ENCODE measurements at regions of chr13 and their contacts with region 1.

Region 1: GRCh38 chr13:110379905-110380341 is 72.8 kb downstream of the COL4A2 start:
- DNase-seq: no peak
- H3K4me3 ChIP-seq: no peak overlapping the region
- H3K27ac ChIP-seq: no peak overlapping the region
- H3K4me1 ChIP-seq: peaks cover 29% of the 10 kb centered on the region
- H3K27me3 ChIP-seq: no peaks in the 10 kb centered on the region
- CTCF ChIP-seq: no peak
- EP300 ChIP-seq: no peak
- POLR2A ChIP-seq: no peak

Region 2: DNA sequence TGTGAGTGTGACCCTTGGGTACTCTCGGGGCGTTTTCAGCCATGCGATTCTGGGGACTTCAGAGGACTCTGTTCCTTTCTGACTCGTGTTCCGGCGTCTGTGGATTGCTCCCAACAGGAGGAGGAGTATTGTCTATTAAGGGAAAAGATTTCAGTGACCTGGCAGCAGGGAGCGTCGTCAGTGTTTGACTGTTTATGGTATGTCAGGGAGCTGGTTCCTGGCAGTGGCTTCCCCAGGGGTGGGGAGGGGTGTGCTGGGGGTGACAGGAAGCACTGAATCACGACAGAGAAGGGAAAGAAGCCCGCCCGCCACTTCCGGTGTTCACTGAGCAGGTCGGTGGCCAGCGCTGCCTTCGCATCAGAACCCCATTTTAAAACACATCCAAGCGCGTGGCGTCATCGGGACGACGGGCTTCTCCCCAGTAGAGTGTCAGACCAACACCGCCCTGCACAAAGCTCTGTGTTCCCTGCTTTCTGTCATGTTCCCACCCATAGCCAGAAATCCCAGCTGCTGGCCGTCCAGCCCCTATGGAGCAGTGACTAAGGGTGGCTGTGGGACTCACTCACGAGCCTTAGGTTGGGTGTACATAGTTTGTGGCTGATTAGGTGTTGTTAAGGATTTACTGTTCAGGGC is 39.0 kb before region 1 on chr13:
- intact Hi-C with region 1: loop called in 1 of 4 experiments (anchors 5 kb)
- DNase-seq: peak; percentile 72 to 85 (median 83)
- H3K4me3 ChIP-seq: peak overlapping the region; percentile 10
- H3K27ac ChIP-seq: peak overlapping the region; percentile 73 to 86
- H3K4me1 ChIP-seq: peaks cover 27% of the 10 kb centered on the region
- H3K27me3 ChIP-seq: no peaks in the 10 kb centered on the region
- CTCF ChIP-seq: no peak
- EP300 ChIP-seq: peak; percentile 85
- POLR2A ChIP-seq: no peak

Region 3: DNA sequence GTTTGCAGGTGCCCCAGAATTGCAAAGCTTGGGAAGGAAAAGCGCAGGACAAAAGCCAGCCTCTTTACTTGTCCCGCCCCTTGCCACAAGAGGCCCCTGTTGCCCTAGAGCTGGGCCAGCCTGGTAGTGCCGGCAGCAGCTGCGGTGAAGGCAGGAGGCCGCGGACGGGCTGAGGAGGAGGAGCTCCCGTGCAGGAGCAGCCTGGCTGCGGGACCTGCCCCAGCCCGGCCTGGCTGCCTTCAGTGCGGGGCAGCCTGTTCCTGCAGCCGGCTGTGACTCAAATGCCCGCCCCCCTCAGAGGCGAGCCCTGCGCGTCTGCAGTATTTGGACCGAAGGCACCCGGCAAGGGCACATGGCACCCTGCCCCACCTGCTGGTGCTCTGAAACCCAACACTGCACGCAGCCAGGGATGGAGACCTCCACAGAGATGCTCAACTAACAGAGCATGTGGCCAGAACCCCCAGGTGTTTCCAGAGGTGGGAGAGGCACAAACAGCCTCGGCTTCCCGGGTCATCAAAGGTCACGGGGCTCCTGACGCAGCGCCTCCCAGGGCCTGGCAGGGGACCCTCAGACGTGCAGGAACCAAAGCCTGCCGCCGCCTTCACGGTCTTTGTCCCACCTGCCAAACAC is 265.1 kb after region 1 on chr13:
- intact Hi-C with region 1: no loop called
- DNase-seq: peak in 4 of 5 donors; percentile 65 to 78 (median 73)
- H3K4me3 ChIP-seq: no peak overlapping the region
- H3K27ac ChIP-seq: no peak overlapping the region
- H3K4me1 ChIP-seq: peaks cover 7% of the 10 kb centered on the region
- H3K27me3 ChIP-seq: no peaks in the 10 kb centered on the region
- CTCF ChIP-seq: no peak
- EP300 ChIP-seq: no peak
- POLR2A ChIP-seq: no peak

Measured in ovary (tissue), 10 donors.